Activated CD4-positive, alpha-beta T cell treated with anti-CD3 and anti-CD28 coated beads for 36 hours (primary cell): ENCODE measurements at regions of chr2 and their contacts with region 1.

Region 1: DNA sequence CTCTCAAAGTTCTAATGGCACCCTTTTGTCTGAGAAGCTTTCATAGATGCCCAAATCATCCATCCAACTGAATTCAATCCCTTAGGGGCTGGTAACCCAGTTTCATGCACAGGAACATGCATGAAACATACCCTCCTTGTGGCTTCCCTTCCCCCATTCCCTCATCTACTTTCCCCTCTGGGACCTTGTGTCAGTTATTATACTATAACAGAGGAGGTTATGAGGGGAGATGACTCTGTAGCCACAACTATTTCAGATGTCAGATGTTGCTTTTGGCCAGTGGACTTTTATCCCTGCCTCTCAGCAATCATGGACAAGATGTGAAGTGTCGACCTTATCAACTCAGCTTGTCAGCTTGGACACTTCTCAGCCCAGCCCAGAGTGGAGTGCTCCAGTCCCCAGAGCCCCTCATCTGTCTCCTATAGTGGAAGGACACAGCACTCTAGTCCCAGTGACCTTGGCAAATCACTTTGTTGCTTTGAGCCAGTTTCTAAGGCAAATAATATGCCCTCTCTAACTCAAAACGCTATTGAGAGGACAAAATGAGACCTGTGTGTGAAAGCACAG is 8.4 kb downstream of the DHRS9 start:
- DNase-seq: no peak
- ATAC-seq: no peak
- H3K4me3 Mint-ChIP-seq: no peak overlapping the region
- H3K27ac Mint-ChIP-seq: no peak overlapping the region
- H3K4me1 Mint-ChIP-seq: peaks cover 22% of the 10 kb centered on the region
- H3K27me3 Mint-ChIP-seq: no peaks in the 10 kb centered on the region

Region 2: DNA sequence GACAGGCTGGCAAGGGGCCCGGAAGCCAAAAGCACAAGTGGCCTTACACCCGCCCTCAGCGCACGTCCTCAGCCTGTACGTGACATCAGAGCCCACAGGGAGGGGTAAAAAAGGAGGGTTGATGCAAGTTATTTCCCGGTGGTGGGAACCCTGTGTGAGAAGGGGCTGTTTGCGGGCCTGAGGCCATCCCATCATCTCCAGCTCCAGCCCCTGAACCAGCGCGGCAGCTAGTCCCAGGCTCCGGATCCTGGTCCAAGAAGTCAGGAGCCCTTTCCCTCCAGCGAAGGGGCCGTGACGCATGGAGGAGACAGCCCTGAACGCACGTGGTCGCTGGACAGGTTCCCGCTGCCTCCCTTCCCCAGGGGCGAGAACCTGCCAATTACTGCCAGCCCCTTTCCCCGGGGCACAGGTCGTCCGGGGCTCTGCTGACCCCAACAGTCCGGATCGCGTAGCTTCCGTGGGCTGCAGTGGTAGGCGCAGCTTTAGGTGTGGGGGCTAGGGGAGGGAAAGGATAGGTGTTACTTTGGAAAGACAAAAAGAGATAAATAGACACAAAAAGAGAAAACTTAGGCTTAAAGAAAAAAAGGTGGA is 285.9 kb after region 1 on chr2:
- CTCF ChIA-PET with region 1: no interaction called
- POLR2A ChIA-PET with region 1: no interaction called
- intact Hi-C with region 1: loop called in 1 of 2 experiments (anchors 5 kb)
- DNase-seq: peak; percentile 80
- ATAC-seq: peak; percentile 73
- H3K4me3 Mint-ChIP-seq: peak overlapping the region; percentile 86
- H3K27ac Mint-ChIP-seq: peak overlapping the region; percentile 49
- H3K4me1 Mint-ChIP-seq: peaks cover 29% of the 10 kb centered on the region
- H3K27me3 Mint-ChIP-seq: peaks cover 38% of the 10 kb centered on the region